H1 (cell line): ENCODE measurements at regions of chr12 and their contacts with region 1.

Region 1: DNA sequence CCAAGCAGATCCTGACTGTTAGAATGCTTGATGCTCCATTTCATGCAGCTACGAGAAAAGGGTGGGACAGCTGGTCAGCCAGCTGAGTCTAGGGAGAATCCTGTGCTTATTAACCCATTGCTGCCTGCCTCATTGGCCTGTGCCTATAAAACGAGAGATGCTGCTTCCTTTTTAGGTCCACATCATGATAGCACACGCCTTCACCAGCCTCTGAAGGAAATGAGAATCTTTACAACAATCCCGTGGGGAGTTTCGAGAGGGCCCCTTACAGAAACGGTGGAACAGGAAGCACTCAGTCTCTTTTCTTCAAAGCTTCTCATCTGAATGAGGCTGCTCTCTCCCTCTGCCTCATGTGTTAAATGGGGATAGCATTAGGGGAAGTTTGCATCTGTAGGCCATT is 147.3 kb upstream of the RFLNA start:
- DNase-seq: no peak
- H3K4me3 ChIP-seq: no peak overlapping the region
- H3K27ac ChIP-seq: no peak overlapping the region
- H3K4me1 ChIP-seq: peaks cover 0 to 22% (median 8%) of the 10 kb centered on the region in 4 experiments; a peak in 4 of 7 replicates
- H3K27me3 ChIP-seq: peaks cover 0 to 2% (median 0%) of the 10 kb centered on the region in 4 experiments; a peak in 2 of 7 replicates
- CTCF ChIP-seq: no peak
- EP300 ChIP-seq: no peak
- POLR2A ChIP-seq: no peak
- RAD21 ChIP-seq: no peak

Region 2: GRCh38 chr12:124160097-124160756 is 12.7 kb after region 1 on chr12:
- CTCF ChIA-PET with region 1: interaction called, 12 read pairs
- POLR2A ChIA-PET with region 1: interaction called, 8 read pairs
- DNase-seq: no peak
- H3K4me3 ChIP-seq: no peak overlapping the region
- H3K27ac ChIP-seq: no peak overlapping the region
- H3K4me1 ChIP-seq: peaks cover 0 to 10% (median 6%) of the 10 kb centered on the region in 4 experiments; a peak in 5 of 7 replicates
- H3K27me3 ChIP-seq: peaks cover 0 to 2% (median 0%) of the 10 kb centered on the region in 4 experiments; a peak in 1 of 7 replicates
- CTCF ChIP-seq: no peak
- EP300 ChIP-seq: no peak
- POLR2A ChIP-seq: no peak
- RAD21 ChIP-seq: no peak; a peak in 1 of 4 replicates